ENCODE measurements at regions of chr12 and their contacts with region 1.

Region 1: DNA sequence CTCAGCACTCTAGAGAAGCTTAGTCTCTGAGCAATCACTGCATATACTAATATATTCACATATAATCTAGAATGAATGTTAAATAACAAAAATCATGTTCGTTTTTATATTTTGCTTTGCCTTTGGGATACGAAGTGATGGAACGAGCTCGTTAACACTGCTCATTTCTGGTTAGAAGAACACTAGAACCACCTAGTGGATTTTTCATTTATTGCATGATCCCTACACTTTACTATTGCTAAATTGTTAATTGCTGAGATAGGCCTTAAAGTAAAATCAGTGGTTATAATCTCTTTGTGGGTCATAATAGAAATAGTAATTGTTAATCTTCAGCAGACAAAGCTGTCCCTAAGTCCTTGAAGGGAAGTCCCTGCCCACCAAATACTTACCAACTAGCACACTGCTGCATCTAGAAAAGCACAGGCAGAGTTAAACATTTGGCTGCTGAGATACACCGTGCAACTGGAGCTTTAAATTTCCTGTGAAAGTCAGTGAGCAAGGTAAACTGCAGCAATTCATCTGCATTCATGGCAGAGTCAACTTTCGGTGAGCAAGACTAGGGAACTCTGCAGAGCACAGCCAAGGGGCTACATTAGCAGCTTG is 353.7 kb downstream of the APAF1 start:
- DNase-seq: no peak
- ATAC-seq: peak; percentile 70
- H3K4me3 Mint-ChIP-seq: no peak overlapping the region
- H3K27ac Mint-ChIP-seq: no peak overlapping the region
- H3K4me1 Mint-ChIP-seq: no peaks in the 10 kb centered on the region
- H3K27me3 Mint-ChIP-seq: peaks cover 5% of the 10 kb centered on the region

Region 2: GRCh38 chr12:98424726-98425401 is 573.9 kb before region 1 on chr12:
- CTCF ChIA-PET with region 1: interaction called, 3 read pairs
- POLR2A ChIA-PET with region 1: no interaction called
- intact Hi-C with region 1: loop called in 1 of 2 experiments (anchors 5 kb)
- DNase-seq: peak; percentile 75
- ATAC-seq: peak; percentile 88
- H3K4me3 Mint-ChIP-seq: no peak overlapping the region
- H3K27ac Mint-ChIP-seq: no peak overlapping the region
- H3K4me1 Mint-ChIP-seq: no peaks in the 10 kb centered on the region
- H3K27me3 Mint-ChIP-seq: peaks cover 1% of the 10 kb centered on the region

Region 3: GRCh38 chr12:98572010-98572409 is 426.8 kb before region 1 on chr12:
- CTCF ChIA-PET with region 1: interaction called, 23 read pairs
- POLR2A ChIA-PET with region 1: no interaction called
- intact Hi-C with region 1: loop called (anchors 1 to 2 kb)
- DNase-seq: no peak
- ATAC-seq: no peak
- H3K4me3 Mint-ChIP-seq: no peak overlapping the region
- H3K27ac Mint-ChIP-seq: no peak overlapping the region
- H3K4me1 Mint-ChIP-seq: peaks cover under 1% of the 10 kb centered on the region
- H3K27me3 Mint-ChIP-seq: no peaks in the 10 kb centered on the region

Region 4: DNA sequence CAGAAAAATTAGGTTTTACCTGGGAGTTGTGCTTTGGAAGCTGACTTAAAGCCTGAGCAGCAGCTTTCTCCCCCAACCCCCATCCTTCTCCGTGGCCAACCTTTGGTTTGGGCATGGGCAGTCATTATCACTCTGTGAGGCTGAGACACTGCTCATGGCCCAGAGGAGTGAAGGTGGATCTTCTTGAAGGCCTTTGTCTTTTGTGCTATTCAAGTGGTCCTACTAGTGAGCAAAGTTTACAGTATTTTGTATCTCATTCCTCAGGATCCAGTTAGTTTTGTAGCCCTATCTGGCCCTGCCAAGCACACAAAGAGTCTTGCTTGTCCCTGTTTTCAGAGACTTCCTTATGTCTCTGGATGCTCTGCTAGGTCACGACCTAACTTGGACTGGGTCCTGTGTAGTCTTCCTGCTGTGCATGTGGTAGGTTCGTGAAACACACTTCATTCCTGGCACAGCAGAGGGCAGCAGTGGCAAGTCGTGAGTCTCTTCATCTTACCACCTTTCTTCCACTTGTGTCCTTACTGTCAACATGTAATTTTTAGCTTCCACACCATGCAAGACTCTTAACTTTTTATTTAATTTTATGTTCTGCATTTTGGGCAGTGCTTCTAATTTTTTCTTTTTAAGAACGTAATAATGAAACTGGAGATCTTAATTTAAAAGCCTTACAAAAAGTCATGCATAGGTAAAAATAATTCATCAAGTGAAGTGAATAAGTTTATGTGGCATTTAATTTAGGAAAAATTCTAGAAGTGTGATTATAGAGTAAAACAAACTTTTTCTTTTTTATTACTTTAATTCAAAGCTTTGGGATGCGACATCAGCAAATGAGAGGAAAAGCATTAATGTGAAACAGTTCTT is 300.0 kb before region 1 on chr12:
- CTCF ChIA-PET with region 1: interaction called, 5 read pairs
- POLR2A ChIA-PET with region 1: no interaction called
- intact Hi-C with region 1: loop called in 1 of 2 experiments (anchors 1 kb)
- DNase-seq: peak; percentile 74
- ATAC-seq: peak; percentile 94
- H3K4me3 Mint-ChIP-seq: no peak overlapping the region
- H3K27ac Mint-ChIP-seq: no peak overlapping the region
- H3K4me1 Mint-ChIP-seq: peaks cover 6% of the 10 kb centered on the region
- H3K27me3 Mint-ChIP-seq: no peaks in the 10 kb centered on the region

Region 5: GRCh38 chr12:98725476-98726247 is 273.1 kb before region 1 on chr12:
- CTCF ChIA-PET with region 1: interaction called, 14 read pairs
- POLR2A ChIA-PET with region 1: no interaction called
- intact Hi-C with region 1: loop called (anchors 1 kb)
- DNase-seq: peak; percentile 83
- ATAC-seq: peak; percentile 89
- H3K4me3 Mint-ChIP-seq: no peak overlapping the region
- H3K27ac Mint-ChIP-seq: no peak overlapping the region
- H3K4me1 Mint-ChIP-seq: peaks cover 11% of the 10 kb centered on the region
- H3K27me3 Mint-ChIP-seq: no peaks in the 10 kb centered on the region

Region 6: GRCh38 chr12:99009654-99010296 is 11.0 kb after region 1 on chr12:
- CTCF ChIA-PET with region 1: interaction called, 15 read pairs
- POLR2A ChIA-PET with region 1: no interaction called
- intact Hi-C with region 1: no loop called
- DNase-seq: no peak
- ATAC-seq: no peak
- H3K4me3 Mint-ChIP-seq: no peak overlapping the region
- H3K27ac Mint-ChIP-seq: no peak overlapping the region
- H3K4me1 Mint-ChIP-seq: no peaks in the 10 kb centered on the region
- H3K27me3 Mint-ChIP-seq: peaks cover 14% of the 10 kb centered on the region